ENCODE measurements at regions of chr15 and their contacts with region 1.

Region 1: DNA sequence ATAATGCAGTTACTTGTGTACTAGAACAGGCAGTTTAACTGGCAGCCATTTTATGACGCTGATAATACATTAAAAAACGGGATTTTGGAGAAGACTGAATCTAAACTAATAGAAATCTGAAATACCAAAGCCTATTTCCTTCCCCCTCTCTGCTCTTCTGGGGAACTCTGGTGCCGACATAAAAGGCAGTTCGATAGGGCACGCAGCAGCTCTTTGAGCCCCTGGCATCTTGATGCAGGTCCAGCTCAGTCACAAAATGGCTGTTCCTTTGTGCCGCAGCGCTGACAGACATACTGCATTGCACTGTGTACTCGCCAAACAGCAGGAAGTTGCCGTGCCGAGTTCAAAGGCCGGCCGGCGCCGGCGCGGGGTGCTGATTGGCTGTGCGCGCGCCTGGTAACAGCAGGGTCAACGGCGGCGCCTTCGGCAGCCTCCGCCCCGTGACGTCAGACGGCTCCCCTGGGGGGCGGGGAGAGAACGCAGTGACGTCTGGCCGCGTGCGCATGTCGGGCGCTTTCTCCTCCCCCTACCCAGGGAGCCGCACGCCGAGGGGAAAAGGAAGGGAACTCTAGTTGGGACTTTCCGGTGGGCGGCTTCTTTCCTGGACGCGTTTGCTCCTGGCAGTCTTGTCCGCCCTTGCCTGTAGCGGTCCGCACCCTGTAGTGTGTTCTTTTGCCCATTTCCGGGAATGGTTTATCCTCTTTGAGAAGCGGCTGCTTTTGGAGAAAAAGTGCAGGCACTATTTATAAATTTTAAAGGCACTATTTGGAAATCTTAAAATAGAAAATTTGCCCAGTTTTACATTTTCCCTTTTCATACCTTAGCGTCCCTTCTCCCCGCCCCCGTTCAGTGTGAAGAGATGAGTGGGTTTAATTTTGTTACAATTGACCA is 4.1 kb downstream of the CHD2 start:
- DNase-seq: peak; percentile 99
- H3K4me3 Mint-ChIP-seq: peak overlapping the region; percentile 93
- H3K27ac Mint-ChIP-seq: peak overlapping the region; percentile 100
- H3K4me1 Mint-ChIP-seq: peaks cover 67% of the 10 kb centered on the region
- H3K27me3 Mint-ChIP-seq: no peaks in the 10 kb centered on the region

Region 2: DNA sequence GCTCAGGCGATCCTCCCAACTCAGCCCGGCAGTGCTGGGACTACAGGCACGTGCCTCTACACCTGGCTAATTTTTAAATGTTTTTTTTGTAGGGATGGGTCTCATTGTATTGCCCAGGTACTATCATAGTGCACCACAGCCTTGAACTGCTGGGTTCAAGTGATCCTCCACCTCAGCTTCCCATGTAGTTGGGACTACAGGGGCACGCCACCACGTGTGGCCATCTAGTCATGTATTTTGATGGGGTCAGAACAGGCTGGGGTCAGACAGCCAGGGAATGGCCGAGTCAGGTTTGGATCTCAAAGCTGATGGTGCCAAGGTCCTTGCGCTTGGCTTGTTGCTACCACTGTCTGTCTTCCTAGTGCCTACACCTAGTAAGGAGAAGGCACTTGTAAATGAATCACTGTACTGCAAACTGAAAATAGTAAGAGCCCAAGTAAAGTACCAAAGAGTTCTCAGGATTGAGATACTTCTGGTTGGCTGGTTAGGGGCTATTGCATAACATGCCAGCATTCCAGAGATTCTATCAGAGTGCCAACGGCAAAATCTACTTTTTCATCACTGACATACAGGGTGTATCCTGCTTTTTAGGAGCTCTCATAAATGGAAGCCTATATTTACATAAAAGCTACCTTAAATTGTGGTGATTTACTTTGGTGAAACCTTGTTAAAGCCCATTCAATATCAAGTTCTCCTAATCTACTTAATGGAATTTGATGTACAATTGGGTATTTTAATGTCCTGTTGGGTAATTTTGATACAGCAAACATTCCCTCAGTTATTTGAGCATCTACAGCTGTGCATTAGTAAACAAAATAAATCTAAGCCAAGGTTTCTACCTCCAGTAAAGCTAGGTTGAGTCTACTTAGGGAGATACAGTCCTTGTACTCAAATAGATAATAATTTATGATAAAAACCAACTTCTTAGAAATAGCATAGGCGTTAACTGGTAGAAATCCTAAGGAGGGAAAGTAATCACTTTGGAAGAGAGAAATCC is 34.9 kb before region 1 on chr15:
- intact Hi-C with region 1: no loop called
- DNase-seq: no peak
- H3K4me3 Mint-ChIP-seq: no peak overlapping the region
- H3K27ac Mint-ChIP-seq: no peak overlapping the region
- H3K4me1 Mint-ChIP-seq: peaks cover 7% of the 10 kb centered on the region
- H3K27me3 Mint-ChIP-seq: peaks cover 1% of the 10 kb centered on the region

Region 3: DNA sequence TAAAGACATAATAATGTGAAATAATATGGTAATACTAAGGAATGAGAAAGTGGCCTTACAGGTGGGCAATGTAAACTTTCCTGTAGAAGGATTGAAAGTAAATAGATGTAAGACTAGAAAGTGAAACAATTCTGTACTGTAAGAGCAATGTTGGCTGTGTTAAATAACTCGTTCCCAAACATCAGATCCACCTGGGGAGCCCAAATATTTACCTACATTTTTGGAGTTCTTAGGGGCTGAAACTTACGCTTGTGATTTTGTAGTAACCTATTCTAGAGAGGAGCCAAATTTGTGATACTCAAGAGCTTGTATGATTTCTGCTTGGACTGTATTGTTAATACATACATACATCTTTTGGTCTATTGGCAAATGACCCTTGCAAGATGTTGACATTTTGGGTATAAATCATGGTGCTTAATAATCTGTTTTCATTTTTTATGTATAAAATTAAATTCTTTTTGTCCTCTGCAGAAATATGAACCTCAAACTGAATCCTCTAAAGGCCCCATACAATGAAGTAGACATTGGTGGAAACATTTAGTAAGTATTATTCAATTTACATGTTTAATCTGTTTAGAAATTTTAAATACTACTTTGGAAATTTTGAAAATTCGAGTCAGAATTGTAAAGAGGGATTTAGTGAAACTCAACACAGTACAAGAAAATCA is 12.5 kb before region 1 on chr15:
- intact Hi-C with region 1: loop called (anchors 1 kb)
- DNase-seq: no peak
- H3K4me3 Mint-ChIP-seq: peak overlapping the region; percentile 62
- H3K27ac Mint-ChIP-seq: peak overlapping the region; percentile 58
- H3K4me1 Mint-ChIP-seq: peaks cover 82% of the 10 kb centered on the region
- H3K27me3 Mint-ChIP-seq: no peaks in the 10 kb centered on the region